ENCODE measurements at regions of chr2 and their contacts with region 1.

Region 1: GRCh38 chr2:3518496-3519254 is 656 bp downstream of the ADI1 start:
- DNase-seq: peak; percentile 99 to 100
- ATAC-seq: peak; percentile 97
- H3K4me3 ChIP-seq: peak overlapping the region; percentile 87 to 94
- H3K27ac ChIP-seq: peak overlapping the region; percentile 93 to 98
- H3K4me1 ChIP-seq: peaks cover 0 to 1% of the 10 kb centered on the region in 2 donors
- H3K27me3 ChIP-seq: no peaks in the 10 kb centered on the region

Region 2: GRCh38 chr2:3493615-3494007 is 25.1 kb before region 1 on chr2:
- intact Hi-C with region 1: loop called in 1 of 2 experiments (anchors 2 kb)
- DNase-seq: peak; percentile 70 to 82
- ATAC-seq: peak; percentile 81
- H3K4me3 ChIP-seq: peak overlapping the region in 1 of 2 donors; percentile 10
- H3K27ac ChIP-seq: peak overlapping the region; percentile 28 to 91
- H3K4me1 ChIP-seq: no peaks in the 10 kb centered on the region
- H3K27me3 ChIP-seq: no peaks in the 10 kb centered on the region

Region 3: DNA sequence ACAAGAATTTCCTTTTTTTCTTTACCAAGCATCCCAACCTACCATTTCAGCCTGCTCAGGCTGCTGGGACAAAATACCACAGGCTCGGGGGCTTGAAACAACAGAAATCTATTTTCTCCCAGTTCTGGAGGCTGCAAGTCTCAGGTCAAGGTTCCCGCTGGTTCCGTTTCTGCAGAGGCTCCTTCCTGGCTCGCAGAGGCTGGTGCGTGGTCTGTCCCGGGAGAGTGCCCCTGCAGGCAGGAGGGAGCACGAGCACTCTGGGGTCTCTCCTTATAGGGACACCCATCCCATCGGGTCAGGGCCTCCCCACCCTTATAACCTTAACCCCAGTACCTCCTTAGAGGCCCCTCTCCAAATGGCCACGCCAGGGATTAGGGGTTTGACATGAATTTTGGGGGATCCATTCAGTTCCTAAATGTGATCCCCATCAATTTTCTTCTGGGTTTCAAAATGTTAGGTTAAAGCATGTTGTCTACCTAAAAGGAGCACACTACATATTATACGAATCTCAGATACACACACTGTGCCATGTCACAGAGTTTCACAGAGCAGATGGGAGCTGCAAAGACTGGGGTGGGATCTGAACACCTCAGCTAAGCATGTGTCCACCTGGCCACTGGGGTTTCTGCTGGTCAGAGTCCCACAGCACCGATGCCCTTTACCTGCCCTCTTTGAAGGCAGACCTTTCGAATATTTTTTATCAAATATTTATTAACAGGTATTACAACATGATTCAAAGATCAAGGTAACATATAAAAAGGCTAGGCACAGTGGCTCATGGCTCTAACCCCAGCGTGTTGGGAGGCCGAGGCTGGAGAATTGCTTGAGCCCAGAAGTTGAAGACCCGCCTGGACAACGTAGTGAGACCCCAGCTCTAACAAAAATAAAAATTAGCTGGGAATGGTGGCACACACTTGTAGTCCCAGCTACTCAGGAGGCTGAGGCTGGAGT is 18.3 kb after region 1 on chr2:
- intact Hi-C with region 1: loop called in 1 of 2 experiments (anchors 1 kb)
- DNase-seq: peak; percentile 79 to 80
- ATAC-seq: peak; percentile 78
- H3K4me3 ChIP-seq: peak overlapping the region; percentile 8 to 35
- H3K27ac ChIP-seq: peak overlapping the region; percentile 97 to 98
- H3K4me1 ChIP-seq: no peaks in the 10 kb centered on the region
- H3K27me3 ChIP-seq: no peaks in the 10 kb centered on the region

Region 4: GRCh38 chr2:3558205-3559014 is 39.7 kb after region 1 on chr2 and contains the start of gene RNASEH1:
- intact Hi-C with region 1: loop called in 1 of 2 experiments (anchors 5 kb)
- DNase-seq: peak; percentile 99 to 100
- ATAC-seq: peak; percentile 100
- H3K4me3 ChIP-seq: peak within 1 kb of the TSS; percentile 70 to 77
- H3K27ac ChIP-seq: peak within 1 kb of the TSS; percentile 51 to 87
- H3K4me1 ChIP-seq: no peaks in the 10 kb centered on the region
- H3K27me3 ChIP-seq: no peaks in the 10 kb centered on the region
- total RNA-seq, gene RNASEH1: 19.9 to 20.1 TPM

Region 5: GRCh38 chr2:3575534-3576262 is 57.0 kb after region 1 on chr2:
- intact Hi-C with region 1: loop called in 1 of 2 experiments (anchors 2 kb)
- DNase-seq: no peak
- ATAC-seq: peak; percentile 8
- H3K4me3 ChIP-seq: peak overlapping the region; percentile 58 to 77
- H3K27ac ChIP-seq: peak overlapping the region; percentile 30 to 74
- H3K4me1 ChIP-seq: peaks cover 0 to 2% of the 10 kb centered on the region in 2 donors
- H3K27me3 ChIP-seq: no peaks in the 10 kb centered on the region

Measured in aorta (tissue), 5 donors.